SK-N-SH (cell line): ENCODE measurements at regions of chr10 and their contacts with region 1.

Region 1: GRCh38 chr10:101141616-101142532 is 10.8 kb downstream of the TLX1 start:
- DNase-seq: peak; percentile 92
- H3K4me3 ChIP-seq: peak overlapping the region in 1 of 2 experiments; percentile 41; a peak in 1 of 4 replicates
- H3K27ac ChIP-seq: no peak overlapping the region
- H3K4me1 ChIP-seq: peaks cover 0 to 3% of the 10 kb centered on the region in 2 experiments; a peak in 1 of 4 replicates
- H3K27me3 ChIP-seq: peaks cover 26% of the 10 kb centered on the region
- CTCF ChIP-seq: peak; percentile 98
- EP300 ChIP-seq: no peak
- RAD21 ChIP-seq: peak; percentile 95

Region 2: GRCh38 chr10:100998991-100999741 is 142.7 kb before region 1 on chr10:
- CTCF ChIA-PET with region 1: interaction called, 12 read pairs
- POLR2A ChIA-PET with region 1: interaction called, 3 read pairs
- DNase-seq: peak; percentile 93
- H3K4me3 ChIP-seq: peak overlapping the region; percentile 66 to 90
- H3K27ac ChIP-seq: peak overlapping the region; percentile 98 to 99
- H3K4me1 ChIP-seq: peaks cover 20 to 37% of the 10 kb centered on the region in 2 experiments; a peak in 3 of 4 replicates
- H3K27me3 ChIP-seq: no peaks in the 10 kb centered on the region
- CTCF ChIP-seq: peak; percentile 77
- EP300 ChIP-seq: no peak; a peak in 1 of 4 replicates
- RAD21 ChIP-seq: peak; percentile 52

Region 3: DNA sequence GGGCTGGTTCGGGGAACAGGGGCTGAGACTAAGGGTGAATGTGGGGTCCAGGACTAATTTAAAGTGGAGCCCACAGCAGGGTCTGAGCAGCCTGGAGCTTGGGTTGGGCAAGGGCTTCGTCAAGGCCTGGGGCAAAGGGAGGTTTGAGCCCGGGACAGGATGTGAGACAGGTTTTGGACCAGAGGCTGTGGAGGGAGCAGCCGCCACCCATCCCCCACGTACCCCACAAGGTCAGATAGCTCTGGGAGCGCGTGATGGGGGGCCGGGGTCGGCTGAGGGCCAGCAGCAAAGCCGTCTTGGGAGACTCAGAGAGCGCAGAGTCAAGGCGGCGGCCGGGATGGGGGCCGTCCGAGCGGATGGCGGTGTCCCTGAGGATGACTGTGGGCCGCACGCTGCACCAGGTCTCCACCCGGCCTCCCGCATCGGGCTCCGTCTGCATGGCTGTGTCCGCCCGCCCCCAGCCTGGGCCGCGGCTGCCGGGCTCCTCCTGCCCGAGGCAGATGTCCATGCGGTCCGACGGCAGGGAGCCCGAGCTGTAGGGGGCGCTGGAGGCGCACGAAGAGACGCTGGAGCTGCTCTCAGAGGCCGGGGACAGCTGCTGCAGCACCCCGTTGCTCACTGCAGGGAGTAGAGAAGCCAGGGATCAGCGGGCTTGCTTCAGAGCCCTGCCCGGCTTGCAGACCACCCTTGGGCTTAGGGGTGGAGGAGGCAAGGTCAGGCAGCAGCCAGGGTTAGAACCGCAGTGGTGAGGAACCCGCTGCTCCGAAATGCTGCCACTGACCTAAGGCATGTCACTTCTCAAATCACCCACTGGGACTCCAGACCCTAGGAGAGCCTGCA is 123.1 kb before region 1 on chr10:
- CTCF ChIA-PET with region 1: interaction called, 27 read pairs
- POLR2A ChIA-PET with region 1: no interaction called
- DNase-seq: peak; percentile 94
- H3K4me3 ChIP-seq: no peak overlapping the region; a peak in 1 of 4 replicates
- H3K27ac ChIP-seq: no peak overlapping the region
- H3K4me1 ChIP-seq: peaks cover 4 to 8% of the 10 kb centered on the region in 2 experiments; a peak in 3 of 4 replicates
- H3K27me3 ChIP-seq: no peaks in the 10 kb centered on the region
- CTCF ChIP-seq: peak; percentile 76
- EP300 ChIP-seq: no peak
- RAD21 ChIP-seq: peak; percentile 76

Region 4: DNA sequence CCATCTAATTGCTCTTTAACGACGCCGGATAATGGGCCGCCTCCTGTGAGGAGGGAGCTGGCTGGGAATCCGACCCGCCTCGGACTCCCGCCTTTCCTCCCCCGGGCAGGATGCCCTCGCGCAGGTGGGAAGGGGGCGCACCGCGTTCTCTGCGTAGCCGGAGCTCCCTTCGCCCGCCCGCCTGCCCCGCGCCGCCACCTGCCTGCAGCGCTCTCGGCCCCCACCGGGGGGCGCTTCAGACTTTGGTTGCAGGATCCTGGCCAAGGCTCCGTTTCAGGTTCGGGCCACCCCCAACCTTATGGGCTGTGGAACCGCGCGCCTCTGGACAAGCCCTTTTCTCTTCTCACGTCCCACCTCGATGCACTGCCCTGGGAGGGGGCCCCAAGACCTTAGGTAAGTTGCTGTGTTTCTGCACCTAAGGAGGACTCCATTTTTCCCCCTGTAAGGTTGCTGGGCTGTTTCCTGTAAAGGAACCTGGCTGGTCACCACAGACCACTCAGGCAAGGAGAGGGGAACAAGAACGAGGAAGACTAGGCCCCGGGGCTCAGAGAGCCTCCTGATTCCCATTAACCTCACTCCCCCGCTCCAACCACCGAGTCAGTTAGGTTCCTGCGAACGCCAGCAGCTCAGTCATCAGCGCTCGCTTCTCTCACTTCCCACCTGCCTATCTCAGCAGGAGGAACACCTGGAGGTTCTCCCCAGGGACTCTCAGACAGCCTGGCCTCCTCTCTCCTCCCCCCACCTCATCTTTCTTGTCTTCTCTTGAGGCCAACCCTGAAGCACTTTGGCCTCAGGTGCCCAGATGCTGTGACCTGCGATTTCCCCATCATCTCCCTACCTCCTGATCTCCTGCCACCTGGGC is 91.4 kb before region 1 on chr10:
- CTCF ChIA-PET with region 1: interaction called, 234 read pairs
- POLR2A ChIA-PET with region 1: no interaction called
- DNase-seq: peak; percentile 87
- H3K4me3 ChIP-seq: peak overlapping the region; percentile 32 to 33; a peak in 3 of 4 replicates
- H3K27ac ChIP-seq: no peak overlapping the region
- H3K4me1 ChIP-seq: peaks cover 4 to 5% of the 10 kb centered on the region in 2 experiments; a peak in 1 of 4 replicates
- H3K27me3 ChIP-seq: no peaks in the 10 kb centered on the region
- CTCF ChIP-seq: peak; percentile 75
- EP300 ChIP-seq: no peak
- RAD21 ChIP-seq: peak; percentile 42

Region 5: DNA sequence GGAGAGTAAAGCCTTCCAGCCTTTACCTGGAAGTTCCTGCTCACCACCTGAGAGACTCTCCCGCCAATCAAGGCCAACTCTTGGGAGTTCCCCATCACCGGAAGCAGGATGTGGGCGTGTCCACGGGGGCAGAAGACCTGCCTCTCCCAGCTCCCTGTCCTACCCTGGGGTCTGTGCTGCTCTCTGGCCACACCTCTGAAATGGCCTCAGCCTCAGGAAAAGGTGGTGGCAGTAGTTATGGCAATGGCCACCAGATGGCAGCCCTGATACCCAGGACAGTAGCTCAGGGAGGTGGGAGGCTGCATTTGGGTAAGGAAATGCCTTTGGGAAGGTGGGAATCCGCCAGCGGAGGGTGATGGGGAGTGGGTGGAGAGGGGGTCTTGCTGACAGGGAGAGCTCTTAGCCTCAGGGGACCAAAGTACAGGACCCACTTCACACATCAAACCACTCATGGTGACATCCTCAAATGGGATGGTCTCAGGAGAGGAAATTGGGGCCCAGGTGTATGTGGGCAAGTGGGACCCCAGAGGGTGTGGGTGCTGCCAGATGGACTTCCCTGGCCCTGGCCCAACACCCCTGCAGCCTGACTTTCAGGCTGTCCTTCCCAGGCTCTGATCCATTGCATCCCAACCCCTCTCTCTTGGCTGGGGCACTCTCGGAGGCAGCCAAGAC is 46.2 kb before region 1 on chr10:
- CTCF ChIA-PET with region 1: interaction called, 972 read pairs
- POLR2A ChIA-PET with region 1: interaction called, 10 read pairs
- DNase-seq: peak; percentile 85
- H3K4me3 ChIP-seq: peak overlapping the region in 1 of 2 experiments; percentile 40; a peak in 1 of 4 replicates
- H3K27ac ChIP-seq: no peak overlapping the region
- H3K4me1 ChIP-seq: peaks cover 0 to 10% of the 10 kb centered on the region in 2 experiments; a peak in 1 of 4 replicates
- H3K27me3 ChIP-seq: peaks cover 34% of the 10 kb centered on the region; the same call in 1 of the 2 replicates
- CTCF ChIP-seq: peak; percentile 81
- EP300 ChIP-seq: no peak
- RAD21 ChIP-seq: peak; percentile 72

Region 6: GRCh38 chr10:101120884-101121653 is 20.8 kb before region 1 on chr10:
- CTCF ChIA-PET with region 1: interaction called, 90 read pairs
- POLR2A ChIA-PET with region 1: no interaction called
- DNase-seq: peak; percentile 9
- H3K4me3 ChIP-seq: no peak overlapping the region
- H3K27ac ChIP-seq: no peak overlapping the region
- H3K4me1 ChIP-seq: peaks cover 0 to 19% of the 10 kb centered on the region in 2 experiments; a peak in 1 of 4 replicates
- H3K27me3 ChIP-seq: peaks cover 88% of the 10 kb centered on the region
- CTCF ChIP-seq: no peak
- EP300 ChIP-seq: no peak
- RAD21 ChIP-seq: no peak

Region 7: DNA sequence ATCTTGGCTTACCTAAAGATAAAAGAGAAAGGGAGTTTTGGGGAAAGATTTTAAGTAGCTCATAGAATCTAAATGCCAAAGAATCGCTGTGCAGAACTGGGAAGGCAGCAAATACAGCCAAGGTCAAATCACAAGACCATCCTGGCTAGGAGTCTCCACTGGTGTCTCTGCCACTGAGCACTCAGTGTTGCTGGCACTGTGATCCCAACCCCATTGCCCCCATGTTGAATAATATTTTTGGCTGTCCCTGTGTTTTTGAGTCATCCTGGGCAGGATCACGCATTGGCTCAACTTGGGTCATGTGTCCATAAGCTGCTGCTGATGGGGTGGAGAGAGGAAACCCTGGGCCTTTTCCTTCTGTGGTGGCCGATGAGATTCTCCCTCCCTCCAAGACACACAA is 10.4 kb after region 1 on chr10:
- CTCF ChIA-PET with region 1: interaction called, 95 read pairs
- POLR2A ChIA-PET with region 1: interaction called, 3 read pairs
- DNase-seq: no peak
- H3K4me3 ChIP-seq: no peak overlapping the region
- H3K27ac ChIP-seq: no peak overlapping the region
- H3K4me1 ChIP-seq: no peaks in the 10 kb centered on the region
- H3K27me3 ChIP-seq: peaks cover 67% of the 10 kb centered on the region
- CTCF ChIP-seq: no peak
- EP300 ChIP-seq: no peak
- RAD21 ChIP-seq: no peak